ENCODE measurements at regions of chr14 and their contacts with region 1.

Region 1: GRCh38 chr14:100662879-100663760 is 63.6 kb upstream of the DLK1 start:
- DNase-seq: peak; percentile 59

Region 2: DNA sequence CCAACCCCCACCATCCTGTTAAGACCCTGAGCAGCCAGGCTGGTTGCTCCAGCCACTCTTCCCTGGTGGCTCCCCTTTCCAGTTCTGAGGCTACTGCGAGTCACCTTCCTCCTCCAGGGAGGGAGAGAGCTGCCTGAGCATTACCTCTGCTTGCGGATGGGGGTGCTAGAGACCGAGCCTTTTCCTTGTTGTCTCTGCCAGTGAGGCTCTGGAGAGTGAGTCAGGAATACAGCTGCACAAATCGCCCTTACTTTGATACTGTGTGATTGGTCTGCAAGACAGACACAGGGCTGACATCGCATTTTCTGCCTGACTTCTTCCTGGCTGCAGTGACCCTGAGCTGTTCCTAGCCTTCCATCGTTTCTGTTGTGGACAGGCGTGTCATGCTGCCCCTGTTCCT is 245.7 kb before region 1 on chr14:
- in situ Hi-C with region 1: loop called (anchors 25 kb)
- DNase-seq: peak; percentile 85

Region 3: DNA sequence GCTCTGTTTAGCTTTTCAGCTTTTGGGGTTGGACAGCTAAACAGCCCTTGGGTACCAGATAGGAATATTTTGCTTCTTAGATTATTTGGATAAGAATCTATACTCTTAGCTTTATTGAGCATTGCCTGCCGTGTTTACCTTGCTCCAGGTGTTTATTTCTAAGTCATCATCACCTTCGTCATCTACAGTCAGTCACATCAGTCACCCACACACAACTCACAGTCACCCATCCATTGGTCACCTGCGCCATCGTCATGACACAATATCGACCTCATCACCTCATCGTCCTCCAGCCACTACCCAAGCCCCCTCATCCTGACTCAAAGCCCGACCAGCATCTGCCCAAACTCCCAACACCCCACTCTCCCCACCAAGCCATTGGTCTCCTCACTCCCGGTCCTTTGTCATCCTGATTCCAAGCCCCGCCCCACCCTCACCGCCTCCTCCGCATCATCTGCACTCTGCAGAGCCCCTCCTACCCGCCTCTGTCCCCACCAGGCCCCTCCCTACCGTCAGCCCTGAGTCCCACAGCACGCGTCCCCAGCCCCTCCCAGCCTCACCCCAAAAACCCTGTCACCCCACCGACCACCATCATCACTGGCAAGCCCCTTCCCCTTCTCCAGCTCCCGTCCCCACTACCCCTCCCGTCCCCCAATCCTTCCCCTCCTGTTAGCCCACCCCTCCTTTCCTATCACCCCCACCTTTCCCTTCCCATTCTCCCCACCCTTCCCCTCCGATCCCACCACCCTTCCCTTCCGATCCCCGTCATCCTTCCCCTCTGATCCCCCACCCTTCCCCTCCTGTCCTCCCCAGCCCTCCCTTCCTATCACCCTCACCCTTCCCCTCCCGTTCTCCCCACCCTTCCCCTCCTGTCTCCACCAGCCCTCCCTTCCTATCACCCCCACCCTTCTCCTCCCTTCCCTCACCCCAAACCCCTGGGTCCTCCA is 73.4 kb after region 1 on chr14:
- in situ Hi-C with region 1: no loop called
- DNase-seq: no peak

Measured in ACHN (cell line).